Transverse colon (tissue), 4 donors: ENCODE measurements at regions of chr6 and their contacts with region 1.

Region 1: DNA sequence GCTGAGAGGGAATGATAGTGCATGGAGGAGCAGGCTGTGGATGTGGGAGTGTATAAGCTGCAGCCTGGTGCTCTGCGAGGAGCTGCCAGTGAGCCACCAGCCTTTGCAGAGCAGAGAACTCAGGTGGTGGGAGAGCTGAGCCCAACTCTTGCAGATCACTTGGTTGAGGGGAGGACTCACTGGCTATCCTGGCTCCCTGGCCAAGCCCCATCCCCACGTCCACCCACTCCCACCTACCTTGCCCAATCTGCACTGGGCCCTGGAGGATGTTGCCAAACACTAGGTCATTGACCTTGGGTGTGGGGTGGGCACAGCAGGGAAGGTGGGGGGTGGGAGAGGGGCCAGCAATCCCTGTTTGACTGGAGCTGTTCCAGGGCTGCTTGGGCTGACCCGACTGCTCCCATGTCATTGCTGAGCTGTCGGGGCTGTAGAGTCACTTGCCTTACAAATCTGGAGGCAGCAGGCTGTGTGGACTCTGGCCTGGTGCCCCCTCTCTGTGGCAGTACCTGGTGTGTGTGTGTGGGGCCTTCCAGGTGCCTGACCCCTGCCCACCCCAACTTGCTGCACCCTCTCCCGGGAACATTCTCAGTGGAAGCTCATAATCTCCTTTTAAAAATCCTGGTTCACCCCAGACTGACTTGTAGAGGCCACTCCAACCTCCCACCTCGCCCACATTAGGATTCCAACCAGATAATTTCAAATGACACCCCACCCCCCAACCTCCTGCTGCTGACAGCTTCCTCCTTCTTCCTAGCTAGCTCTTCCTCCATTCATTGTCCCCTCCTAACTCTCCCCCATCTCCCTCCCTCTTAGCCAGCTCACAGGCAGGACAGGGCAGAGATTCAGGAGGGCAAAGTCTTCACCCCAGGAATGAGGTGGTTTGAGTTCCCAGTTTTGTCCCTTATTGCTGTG is 162.3 kb downstream of the MRPL14 start:
- DNase-seq: no peak
- H3K4me3 ChIP-seq: no peak overlapping the region
- H3K27ac ChIP-seq: no peak overlapping the region
- H3K4me1 ChIP-seq: no peaks in the 10 kb centered on the region
- H3K27me3 ChIP-seq: no peaks in the 10 kb centered on the region
- CTCF ChIP-seq: no peak
- EP300 ChIP-seq: no peak
- POLR2A ChIP-seq: no peak

Region 2: DNA sequence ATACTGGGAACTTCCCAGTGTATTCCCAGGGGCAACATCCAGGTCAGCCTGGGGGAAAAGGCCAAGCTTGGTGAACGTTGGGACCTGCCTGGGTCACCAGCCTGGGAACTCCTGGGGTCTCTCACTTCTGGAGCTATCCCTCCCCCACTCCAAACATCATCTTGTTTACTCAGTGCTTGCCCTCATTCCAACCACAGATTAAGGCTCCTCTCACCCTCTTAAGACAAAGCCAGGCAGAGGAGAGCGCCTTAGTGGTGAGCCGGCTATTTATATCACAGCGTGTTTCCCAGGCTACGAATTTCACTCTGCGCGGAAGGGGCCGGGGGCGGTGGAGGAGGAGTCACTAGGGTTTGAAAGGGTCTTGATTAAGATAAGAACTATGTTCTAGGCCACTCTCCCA is 1254.6 kb before region 1 on chr6:
- in situ Hi-C with region 1: no loop called
- intact Hi-C with region 1: loop called (anchors 10 kb)
- DNase-seq: no peak
- H3K4me3 ChIP-seq: no peak overlapping the region
- H3K27ac ChIP-seq: no peak overlapping the region
- H3K4me1 ChIP-seq: no peaks in the 10 kb centered on the region
- H3K27me3 ChIP-seq: no peaks in the 10 kb centered on the region
- CTCF ChIP-seq: no peak
- EP300 ChIP-seq: no peak
- POLR2A ChIP-seq: no peak

Region 3: GRCh38 chr6:44016131-44016870 is 51.4 kb after region 1 on chr6:
- in situ Hi-C with region 1: no loop called
- intact Hi-C with region 1: no loop called
- DNase-seq: no peak
- H3K4me3 ChIP-seq: no peak overlapping the region
- H3K27ac ChIP-seq: no peak overlapping the region
- H3K4me1 ChIP-seq: no peaks in the 10 kb centered on the region
- H3K27me3 ChIP-seq: no peaks in the 10 kb centered on the region
- CTCF ChIP-seq: no peak
- EP300 ChIP-seq: no peak
- POLR2A ChIP-seq: no peak

Region 4: DNA sequence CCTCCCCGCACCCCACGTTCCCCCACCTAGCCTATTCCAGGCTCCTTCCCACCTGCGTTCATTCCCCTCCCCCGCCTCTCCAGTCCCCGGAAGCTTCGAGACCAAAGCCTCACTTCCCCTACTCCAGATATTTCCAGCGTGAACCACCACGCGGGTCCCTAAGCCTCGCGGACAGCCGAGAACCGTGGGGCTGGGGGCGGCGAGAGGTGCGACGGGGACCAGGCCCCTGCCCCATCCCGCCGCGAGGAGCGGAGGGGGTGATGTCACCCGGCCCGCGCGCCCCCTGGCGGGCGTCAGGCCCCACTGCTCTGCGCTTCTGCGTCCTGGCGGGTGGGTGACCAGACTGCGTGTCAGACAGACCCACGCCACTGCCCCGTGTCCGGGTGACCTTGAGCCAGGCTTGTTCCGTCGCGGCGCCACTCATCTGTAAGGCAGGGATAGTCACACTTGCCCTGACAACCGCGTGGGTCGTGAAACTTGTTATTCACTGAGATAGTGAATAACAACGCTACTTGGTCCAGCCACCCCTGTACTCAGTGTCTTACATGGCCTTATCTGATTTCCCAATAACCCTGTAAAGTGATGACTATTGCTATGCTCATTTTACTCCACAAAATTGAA is 273.0 kb after region 1 on chr6:
- in situ Hi-C with region 1: no loop called
- intact Hi-C with region 1: no loop called
- DNase-seq: peak; percentile 85
- H3K4me3 ChIP-seq: peak overlapping the region; percentile 36 to 62 (median 44)
- H3K27ac ChIP-seq: peak overlapping the region; percentile 91 to 94 (median 92)
- H3K4me1 ChIP-seq: peaks cover 30 to 48% (median 39%) of the 10 kb centered on the region in 4 donors
- H3K27me3 ChIP-seq: no peaks in the 10 kb centered on the region
- CTCF ChIP-seq: peak; percentile 98 to 99 (median 99)
- EP300 ChIP-seq: no peak
- POLR2A ChIP-seq: peak; percentile 55